Left ventricle myocardium inferior (tissue), 1 donor: ENCODE measurements at regions of chr4 and their contacts with region 1.

Region 1: GRCh38 chr4:123832173-123833026 is 435.8 kb downstream of the SPRY1 start:
- DNase-seq: peak; percentile 46
- H3K4me3 ChIP-seq: no peak overlapping the region
- H3K27ac ChIP-seq: peak overlapping the region; percentile 91
- H3K4me1 ChIP-seq: peaks cover 65% of the 10 kb centered on the region
- H3K27me3 ChIP-seq: no peaks in the 10 kb centered on the region
- CTCF ChIP-seq: no peak

Region 2: DNA sequence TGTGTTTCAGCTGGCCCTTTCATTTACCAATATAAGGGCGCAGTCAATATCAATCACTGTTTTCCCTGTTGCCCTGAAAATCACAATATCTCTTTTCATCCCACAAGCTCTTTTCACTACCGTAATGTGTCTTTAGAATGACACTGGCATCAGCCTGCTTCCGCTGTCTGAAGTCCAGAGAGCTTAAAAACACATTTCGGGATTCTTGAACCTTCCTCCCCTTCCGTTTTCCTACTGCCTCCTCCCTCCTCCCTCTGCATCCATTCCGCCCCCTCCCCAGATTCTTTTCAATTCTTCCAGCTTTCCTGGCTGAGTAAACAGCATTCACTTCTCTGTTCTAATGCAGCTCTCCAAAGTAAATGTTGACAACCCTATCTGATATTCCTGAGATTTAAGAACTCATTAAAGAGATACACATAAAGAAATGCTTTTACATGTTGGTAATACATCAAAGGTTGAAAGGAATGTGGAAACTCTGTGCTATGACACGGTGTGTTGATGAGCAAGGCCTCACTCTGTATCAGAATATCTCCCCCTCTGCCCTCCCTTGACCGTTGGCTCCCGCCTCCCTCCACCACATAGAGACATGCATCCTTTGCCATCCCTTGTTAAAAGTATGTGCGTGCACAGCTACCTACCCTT is 519.3 kb before region 1 on chr4:
- intact Hi-C with region 1: no loop called
- DNase-seq: no peak
- H3K4me3 ChIP-seq: no peak overlapping the region
- H3K27ac ChIP-seq: no peak overlapping the region
- H3K4me1 ChIP-seq: no peaks in the 10 kb centered on the region
- H3K27me3 ChIP-seq: no peaks in the 10 kb centered on the region
- CTCF ChIP-seq: no peak

Region 3: GRCh38 chr4:123488916-123489315 is 343.5 kb before region 1 on chr4:
- intact Hi-C with region 1: no loop called
- DNase-seq: no peak
- H3K4me3 ChIP-seq: no peak overlapping the region
- H3K27ac ChIP-seq: no peak overlapping the region
- H3K4me1 ChIP-seq: no peaks in the 10 kb centered on the region
- H3K27me3 ChIP-seq: no peaks in the 10 kb centered on the region
- CTCF ChIP-seq: no peak

Region 4: DNA sequence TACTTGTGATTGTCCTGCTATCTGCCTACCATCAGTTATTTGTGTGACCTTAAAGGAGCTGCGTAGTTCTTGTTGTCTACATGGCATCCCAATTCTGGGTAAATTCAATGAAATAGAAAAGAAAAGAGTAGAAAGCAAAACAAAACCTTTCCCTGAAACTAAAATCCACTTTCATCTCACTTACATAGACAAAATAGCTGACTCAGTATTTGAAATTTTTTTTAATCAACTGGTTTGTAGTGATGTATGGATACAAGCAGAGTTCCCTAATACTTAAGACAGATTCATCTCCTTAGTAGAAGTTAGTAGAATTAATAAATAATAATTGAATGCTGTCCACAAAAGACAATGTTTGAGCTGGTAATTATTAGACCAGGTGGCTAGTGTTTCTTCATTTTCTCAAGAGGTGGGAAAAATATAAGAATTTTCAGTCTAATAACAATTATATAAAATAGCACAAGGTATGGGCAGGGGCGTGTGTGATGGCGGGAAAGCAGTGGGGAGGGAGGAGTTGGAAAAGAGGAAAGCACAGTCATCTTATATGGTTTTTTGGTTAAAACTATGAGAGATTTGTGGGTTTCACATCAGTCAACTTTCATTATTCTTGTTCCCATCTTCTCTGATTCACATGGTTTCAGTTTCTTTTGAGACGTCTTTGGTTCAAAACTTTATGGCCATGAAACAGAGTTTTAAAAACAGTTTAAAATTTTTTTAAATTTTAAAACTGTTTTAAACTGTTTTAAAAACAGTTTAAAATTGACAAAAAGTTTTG is 160.6 kb before region 1 on chr4:
- intact Hi-C with region 1: loop called (anchors 5 kb)
- DNase-seq: no peak
- H3K4me3 ChIP-seq: no peak overlapping the region
- H3K27ac ChIP-seq: no peak overlapping the region
- H3K4me1 ChIP-seq: peaks cover 5% of the 10 kb centered on the region
- H3K27me3 ChIP-seq: no peaks in the 10 kb centered on the region
- CTCF ChIP-seq: no peak